Caco-2 (cell line): ENCODE measurements at regions of chr22 and their contacts with region 1.

Region 1: DNA sequence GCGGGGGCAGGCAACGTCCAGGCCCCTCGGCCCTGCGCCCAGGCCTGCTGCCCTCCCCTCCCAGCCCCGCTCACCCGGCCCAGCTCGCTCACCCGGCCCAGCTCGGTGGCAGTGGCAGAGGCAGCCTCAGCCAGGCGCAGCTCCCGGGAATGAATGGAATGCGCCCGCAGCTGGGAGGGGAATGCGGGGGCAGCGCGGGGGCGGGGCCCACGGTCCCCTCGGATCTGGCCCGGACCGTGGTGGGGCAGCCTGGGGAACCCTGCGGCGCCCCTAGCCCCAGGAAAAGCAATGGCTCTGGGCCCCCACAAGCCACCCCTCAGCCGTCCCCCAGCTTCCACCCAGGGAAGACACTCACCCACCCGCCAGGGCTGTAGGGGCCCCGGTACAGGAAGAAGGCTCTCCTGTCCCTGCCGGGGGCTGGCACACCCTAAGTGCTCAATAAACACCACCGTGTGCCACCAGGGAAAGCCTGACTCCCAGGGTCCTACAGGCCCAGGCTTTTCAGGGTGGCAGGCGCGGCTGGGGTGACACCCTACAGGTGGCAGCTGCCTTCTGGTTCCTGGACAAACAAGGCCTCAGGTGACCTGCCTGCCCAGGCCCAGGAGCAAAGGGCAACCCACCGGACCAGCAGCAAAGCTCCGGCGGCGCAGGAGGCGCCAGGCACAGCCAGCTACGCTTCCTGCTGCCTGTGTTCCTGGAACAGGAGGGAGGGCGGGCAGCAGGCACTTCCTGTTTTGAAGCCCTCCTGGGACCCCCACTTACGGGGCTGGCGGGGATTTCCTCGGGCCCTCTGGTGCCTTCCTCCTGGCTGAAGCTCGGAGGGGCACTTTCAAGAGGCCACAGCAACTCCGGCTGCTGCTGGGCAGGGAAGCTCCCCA is 13.8 kb downstream of the PLXNB2 start:
- DNase-seq: peak; percentile 90 to 92
- H3K4me3 ChIP-seq: peak overlapping the region; percentile 46
- H3K4me3 Mint-ChIP-seq: peak overlapping the region; percentile 75
- H3K27ac Mint-ChIP-seq: peak overlapping the region; percentile 90
- H3K4me1 ChIP-seq: peaks cover 45% of the 10 kb centered on the region
- H3K4me1 Mint-ChIP-seq: peaks cover 16% of the 10 kb centered on the region
- H3K27me3 ChIP-seq: no peaks in the 10 kb centered on the region
- H3K27me3 Mint-ChIP-seq: no peaks in the 10 kb centered on the region
- CTCF ChIP-seq: no peak

Region 2: DNA sequence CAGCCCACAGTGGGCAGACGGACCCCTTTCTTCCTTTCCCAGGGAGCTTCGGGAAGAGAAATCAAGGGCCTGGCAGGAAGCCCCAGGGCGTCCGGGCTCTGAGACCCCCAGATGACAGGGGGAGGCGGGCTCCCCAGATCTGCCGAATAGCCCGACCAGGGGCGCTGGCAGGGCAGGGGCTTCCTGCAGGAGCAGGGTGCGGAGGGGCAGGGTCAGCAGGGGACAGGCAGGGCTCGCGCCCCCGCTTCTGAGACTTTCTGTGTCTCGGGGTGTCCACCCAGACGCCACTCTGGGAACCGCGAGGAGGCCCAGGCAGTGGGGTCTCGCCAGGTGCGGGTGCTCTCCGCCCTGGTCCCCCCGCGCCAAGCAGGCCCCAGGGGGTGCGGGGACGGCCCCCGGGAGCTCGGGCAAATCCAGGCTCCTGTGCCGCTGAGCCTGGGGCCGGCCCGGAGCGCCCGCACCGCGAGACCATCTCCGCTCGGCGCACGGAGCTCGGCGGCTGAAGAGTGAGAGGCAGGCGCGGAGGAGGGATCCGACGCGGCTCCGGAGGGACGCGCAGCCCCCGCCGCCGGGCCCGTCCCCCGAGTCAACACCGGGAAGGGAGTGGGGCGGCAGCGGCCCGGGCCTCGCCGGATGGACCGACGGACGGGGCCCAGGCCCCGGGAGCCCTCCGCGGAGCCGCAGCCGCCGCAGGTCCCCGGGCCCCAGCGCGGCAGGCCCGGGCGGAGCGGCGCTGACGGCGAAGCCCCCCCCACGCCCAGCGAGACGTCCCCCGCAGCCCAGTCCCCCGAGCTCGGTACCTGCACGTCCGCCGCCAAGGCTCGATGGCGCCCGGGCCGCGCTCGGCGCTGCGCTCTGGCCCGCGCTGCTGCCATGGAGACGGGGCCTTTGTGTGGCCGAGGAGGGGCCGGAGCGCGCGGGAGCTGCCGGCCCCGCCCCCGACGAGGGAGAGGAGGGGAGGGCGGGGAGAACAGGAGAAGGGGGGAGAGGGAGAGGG is 13.4 kb after region 1 on chr22 and contains the start of gene PLXNB2:
- CTCF ChIA-PET with region 1: interaction called, 8 read pairs
- POLR2A ChIA-PET with region 1: interaction called, 25 read pairs
- intact Hi-C with region 1: no loop called
- DNase-seq: peak; percentile 73 to 78
- H3K4me3 ChIP-seq: peak within 1 kb of the TSS; percentile 49
- H3K4me3 Mint-ChIP-seq: peak within 1 kb of the TSS; percentile 71
- H3K27ac Mint-ChIP-seq: no peak within 1 kb of the TSS
- H3K4me1 ChIP-seq: peaks cover 39% of the 10 kb centered on the region
- H3K4me1 Mint-ChIP-seq: peaks cover 13% of the 10 kb centered on the region
- H3K27me3 ChIP-seq: no peaks in the 10 kb centered on the region
- H3K27me3 Mint-ChIP-seq: no peaks in the 10 kb centered on the region
- CTCF ChIP-seq: no peak
- total RNA-seq, gene PLXNB2: 260 and 262 TPM in 2 replicates

Region 3: DNA sequence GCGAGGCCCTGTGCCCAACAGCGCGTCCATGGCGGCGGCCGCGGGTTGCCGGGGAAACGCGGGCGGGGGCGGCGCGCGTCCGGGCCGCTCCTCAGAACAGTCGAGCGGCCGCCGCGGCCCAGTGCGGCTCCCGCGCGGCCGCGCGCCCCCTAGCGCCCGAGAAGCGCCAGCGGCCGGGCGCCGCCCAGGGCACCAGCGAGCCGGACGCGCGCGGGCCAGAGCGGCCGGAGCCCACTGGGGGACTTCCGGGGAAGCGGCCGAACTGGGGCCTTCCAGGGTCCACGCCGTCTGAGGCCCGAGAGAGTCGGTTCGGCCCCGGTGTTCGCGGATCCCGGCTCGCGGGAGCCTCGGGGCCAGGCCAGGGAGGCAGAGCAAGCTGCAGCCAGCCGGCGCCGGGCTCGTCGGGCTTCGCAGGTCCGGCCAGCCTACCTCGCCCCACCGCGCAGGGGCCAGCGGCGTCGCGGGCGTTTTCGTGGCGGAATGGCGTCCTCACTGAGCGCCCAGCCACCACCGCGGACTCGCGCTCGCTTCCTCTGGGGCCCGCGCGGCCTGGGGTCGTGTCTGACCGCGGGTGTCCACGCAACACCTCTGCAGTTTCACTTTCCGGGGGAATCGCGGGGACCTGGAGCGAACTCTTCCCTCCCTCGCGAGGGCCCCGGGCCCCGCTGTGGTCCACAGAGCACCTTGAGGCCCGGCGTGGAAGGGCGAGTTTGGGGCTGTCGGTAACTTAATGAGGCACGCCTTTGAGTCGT is 33.5 kb after region 1 on chr22 and contains the start of gene DENND6B:
- CTCF ChIA-PET with region 1: interaction called, 8 read pairs
- POLR2A ChIA-PET with region 1: interaction called, 13 read pairs
- intact Hi-C with region 1: no loop called
- DNase-seq: peak; percentile 61 to 86
- H3K4me3 ChIP-seq: peak within 1 kb of the TSS; percentile 95
- H3K4me3 Mint-ChIP-seq: peak within 1 kb of the TSS; percentile 92
- H3K27ac Mint-ChIP-seq: peak within 1 kb of the TSS; percentile 84
- H3K4me1 ChIP-seq: no peaks in the 10 kb centered on the region; the same call in 1 of the 2 replicates
- H3K4me1 Mint-ChIP-seq: peaks cover 15% of the 10 kb centered on the region
- H3K27me3 ChIP-seq: no peaks in the 10 kb centered on the region
- H3K27me3 Mint-ChIP-seq: no peaks in the 10 kb centered on the region
- CTCF ChIP-seq: peak; percentile 9 to 26
- total RNA-seq, gene DENND6B: 3.4 and 5.5 TPM in 2 replicates

Region 4: GRCh38 chr22:50348058-50348457 is 54.4 kb after region 1 on chr22:
- CTCF ChIA-PET with region 1: no interaction called
- POLR2A ChIA-PET with region 1: no interaction called
- intact Hi-C with region 1: no loop called
- DNase-seq: no peak
- H3K4me3 ChIP-seq: no peak overlapping the region
- H3K4me3 Mint-ChIP-seq: no peak overlapping the region
- H3K27ac Mint-ChIP-seq: no peak overlapping the region
- H3K4me1 ChIP-seq: no peaks in the 10 kb centered on the region
- H3K4me1 Mint-ChIP-seq: no peaks in the 10 kb centered on the region
- H3K27me3 ChIP-seq: no peaks in the 10 kb centered on the region
- H3K27me3 Mint-ChIP-seq: no peaks in the 10 kb centered on the region
- CTCF ChIP-seq: no peak

Region 5: GRCh38 chr22:50599786-50600455 is 306.2 kb after region 1 on chr22:
- CTCF ChIA-PET with region 1: no interaction called
- POLR2A ChIA-PET with region 1: no interaction called
- intact Hi-C with region 1: no loop called
- DNase-seq: peak; percentile 62 to 87
- H3K4me3 ChIP-seq: peak overlapping the region; percentile 34
- H3K4me3 Mint-ChIP-seq: peak overlapping the region; percentile 74
- H3K27ac Mint-ChIP-seq: peak overlapping the region; percentile 51
- H3K4me1 ChIP-seq: peaks cover 5% of the 10 kb centered on the region
- H3K4me1 Mint-ChIP-seq: peaks cover 7% of the 10 kb centered on the region
- H3K27me3 ChIP-seq: no peaks in the 10 kb centered on the region
- H3K27me3 Mint-ChIP-seq: peaks cover 7% of the 10 kb centered on the region
- CTCF ChIP-seq: no peak